Endothelial cell of umbilical vein (primary cell): ENCODE measurements at regions of chr1 and their contacts with region 1.

Region 1: GRCh38 chr1:222465211-222466041 is 82.5 kb downstream of the HHIPL2 start:
- DNase-seq: peak; percentile 97
- H3K4me3 ChIP-seq: peak overlapping the region; percentile 49 to 71 (median 53)
- H3K27ac ChIP-seq: peak overlapping the region; percentile 83
- H3K4me1 ChIP-seq: peaks cover 2% of the 10 kb centered on the region
- H3K27me3 ChIP-seq: peaks cover 6 to 7% of the 10 kb centered on the region in 2 experiments
- CTCF ChIP-seq: peak; percentile 95 to 100
- POLR2A ChIP-seq: peak; percentile 80

Region 2: DNA sequence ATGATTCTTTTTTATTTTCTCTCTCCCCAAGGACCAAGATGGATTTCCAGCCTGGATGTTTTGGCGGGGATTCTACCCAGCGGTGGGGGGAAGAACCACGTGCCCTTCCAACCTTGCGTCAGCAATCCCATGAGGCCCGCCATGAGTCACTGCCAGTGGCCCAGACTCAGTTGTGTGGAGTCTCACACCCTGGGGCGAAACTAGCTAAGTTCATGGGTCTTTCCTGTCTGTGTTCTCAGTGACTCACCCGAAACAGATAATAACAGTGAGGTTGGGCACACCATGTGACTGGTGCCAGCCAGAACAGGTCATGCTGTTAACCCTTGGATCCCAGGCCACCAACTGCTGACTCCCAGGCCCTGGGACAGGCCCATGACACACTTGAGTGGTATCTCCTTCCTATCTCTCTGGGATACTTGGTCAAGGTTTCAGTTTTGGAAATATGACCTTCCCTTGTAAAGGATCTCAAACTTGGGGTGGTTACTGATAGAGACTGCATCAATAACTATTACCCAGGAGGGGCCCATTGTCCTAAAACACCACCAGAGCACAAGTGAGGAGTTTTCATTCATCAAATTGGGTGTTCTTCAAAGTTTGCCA is 625.5 kb before region 1 on chr1:
- CTCF ChIA-PET with region 1: no interaction called
- POLR2A ChIA-PET with region 1: no interaction called
- dilution Hi-C with region 1: no loop called
- intact Hi-C with region 1: no loop called
- DNase-seq: peak; percentile 45
- H3K4me3 ChIP-seq: no peak overlapping the region
- H3K27ac ChIP-seq: peak overlapping the region; percentile 4
- H3K4me1 ChIP-seq: peaks cover 16% of the 10 kb centered on the region
- H3K27me3 ChIP-seq: no peaks in the 10 kb centered on the region
- CTCF ChIP-seq: no peak
- POLR2A ChIP-seq: no peak

Region 3: DNA sequence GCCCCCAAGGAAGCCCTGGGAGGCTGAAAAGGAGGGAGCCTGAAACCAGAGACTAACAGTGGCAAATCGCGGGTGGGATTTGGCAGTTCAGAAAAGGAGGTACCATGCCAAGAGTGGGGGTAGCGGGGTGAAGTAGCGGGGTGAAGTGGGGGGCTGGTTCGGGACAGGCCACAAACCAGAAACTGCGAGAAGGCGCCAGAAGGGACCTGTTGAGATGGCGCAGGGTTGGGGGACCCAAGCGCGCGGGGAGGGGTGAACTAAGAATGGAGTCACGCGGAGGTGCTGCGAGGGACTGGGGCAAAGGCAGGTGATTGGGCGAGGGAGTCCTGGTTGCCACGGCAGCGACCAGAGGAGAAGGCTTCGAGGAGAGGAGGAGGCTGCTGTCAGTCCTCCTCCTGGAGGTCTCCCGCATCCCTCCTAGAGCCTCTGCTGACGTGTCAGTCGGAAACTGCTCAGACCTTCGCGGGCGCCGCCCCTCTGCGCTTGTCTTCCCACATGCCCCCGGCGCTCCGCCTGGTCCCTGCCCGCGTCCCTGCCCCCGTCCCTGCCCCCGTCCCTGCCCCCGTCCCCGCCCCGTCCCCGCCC is 152.0 kb after region 1 on chr1:
- CTCF ChIA-PET with region 1: interaction called, 12 read pairs
- POLR2A ChIA-PET with region 1: no interaction called
- dilution Hi-C with region 1: no loop called
- intact Hi-C with region 1: loop called (anchors 1 kb)
- DNase-seq: peak; percentile 85
- H3K4me3 ChIP-seq: peak overlapping the region; percentile 19 to 55 (median 31)
- H3K27ac ChIP-seq: peak overlapping the region; percentile 18
- H3K4me1 ChIP-seq: peaks cover 7% of the 10 kb centered on the region
- H3K27me3 ChIP-seq: peaks cover 8 to 29% of the 10 kb centered on the region in 2 experiments
- CTCF ChIP-seq: no peak
- POLR2A ChIP-seq: peak; percentile 63

Region 4: GRCh38 chr1:222634180-222635013 is 169.0 kb after region 1 on chr1:
- CTCF ChIA-PET with region 1: interaction called, 154 read pairs
- POLR2A ChIA-PET with region 1: interaction called, 6 read pairs
- dilution Hi-C with region 1: no loop called
- intact Hi-C with region 1: loop called (anchors 1 kb)
- DNase-seq: peak; percentile 93
- H3K4me3 ChIP-seq: no peak overlapping the region
- H3K27ac ChIP-seq: no peak overlapping the region
- H3K4me1 ChIP-seq: no peaks in the 10 kb centered on the region
- H3K27me3 ChIP-seq: no peaks in the 10 kb centered on the region
- CTCF ChIP-seq: peak; percentile 64 to 72
- POLR2A ChIP-seq: no peak

Region 5: DNA sequence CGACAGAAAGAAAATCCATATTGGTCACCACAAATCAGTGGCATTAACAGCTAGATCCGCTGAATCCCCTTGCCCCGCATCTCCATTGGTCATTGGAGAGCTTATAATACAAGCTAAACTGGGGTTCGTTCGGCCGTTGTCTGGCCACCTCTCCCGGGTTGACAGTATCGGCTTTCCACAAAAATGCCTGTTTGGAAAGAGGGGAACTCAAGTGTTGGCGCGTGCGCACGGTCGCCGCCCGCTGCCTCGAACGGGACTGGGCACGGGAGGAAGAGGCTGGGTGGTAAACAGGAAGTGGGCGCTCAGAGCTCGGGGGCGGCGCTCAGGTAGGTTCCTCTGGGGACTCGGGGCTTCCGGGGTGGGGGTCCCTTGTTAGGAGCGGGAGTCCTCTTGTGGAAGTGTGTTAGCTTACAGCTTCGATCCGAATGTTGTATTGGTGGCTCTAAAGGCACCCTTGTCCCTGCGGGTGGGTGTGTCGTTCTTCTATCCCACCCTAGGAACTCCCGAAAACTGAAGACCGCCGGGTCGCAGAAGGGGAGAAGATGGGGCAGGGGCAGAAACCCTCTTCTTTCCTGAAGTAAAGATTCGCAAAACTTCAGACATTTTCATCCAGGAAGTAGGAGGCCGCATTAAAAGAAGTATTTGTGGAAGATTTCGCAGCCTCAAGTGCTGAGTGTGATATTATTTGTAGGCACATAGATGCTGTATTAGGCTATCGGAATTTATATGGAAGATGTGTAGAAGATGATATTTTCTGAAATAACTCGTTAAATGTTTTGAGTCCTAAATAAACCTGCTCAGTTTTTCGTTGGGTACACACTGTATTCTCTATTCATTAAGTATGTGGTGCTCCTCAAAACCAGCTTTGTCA is 247.9 kb after region 1 on chr1:
- CTCF ChIA-PET with region 1: interaction called, 5 read pairs
- POLR2A ChIA-PET with region 1: no interaction called
- dilution Hi-C with region 1: no loop called
- intact Hi-C with region 1: loop called (anchors 1 kb)
- DNase-seq: peak; percentile 97
- H3K4me3 ChIP-seq: peak overlapping the region; percentile 54 to 98 (median 92)
- H3K27ac ChIP-seq: peak overlapping the region; percentile 90
- H3K4me1 ChIP-seq: peaks cover 14% of the 10 kb centered on the region
- H3K27me3 ChIP-seq: no peaks in the 10 kb centered on the region
- CTCF ChIP-seq: no peak
- POLR2A ChIP-seq: no peak